ENCODE measurements at regions of chr15 and their contacts with region 1.

Region 1: DNA sequence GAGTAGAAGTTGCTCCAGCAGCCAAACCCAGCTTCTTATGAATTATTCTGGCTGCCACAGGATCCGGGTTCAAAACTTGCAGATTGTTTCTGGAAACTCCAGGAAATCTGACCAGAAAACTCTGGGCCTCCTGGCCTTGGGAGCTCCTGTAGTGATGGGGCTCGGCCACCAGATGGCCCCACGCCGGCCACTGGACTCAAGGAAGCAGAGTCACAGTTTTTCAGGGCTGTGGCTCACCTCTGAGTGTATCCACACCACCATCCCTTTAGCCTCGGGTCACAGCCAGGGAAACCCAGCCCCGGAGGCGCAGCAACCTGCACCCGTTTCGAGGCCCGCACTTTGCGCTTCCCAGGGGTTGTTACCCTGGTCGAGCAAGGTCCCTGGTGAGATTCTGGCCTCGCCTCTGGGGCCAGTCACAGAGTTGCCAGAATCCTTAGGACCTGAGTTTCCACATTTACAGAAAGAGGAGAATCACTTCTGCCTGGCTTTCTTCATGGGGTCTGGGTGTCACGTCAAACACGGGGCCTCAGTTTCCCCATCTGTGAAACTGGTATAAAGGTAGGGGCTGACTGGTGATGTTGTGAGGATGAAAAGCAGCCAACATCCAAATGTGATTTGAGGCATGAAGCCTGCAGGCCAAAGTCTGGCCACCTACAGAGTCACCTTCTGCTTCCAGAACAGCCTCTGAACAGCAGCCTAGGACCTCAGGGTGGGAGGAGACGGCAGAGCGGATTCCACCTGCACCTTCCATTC is 53.5 kb upstream of the LCTL start:
- DNase-seq: peak; percentile 57
- H3K4me3 ChIP-seq: no peak overlapping the region
- H3K27ac ChIP-seq: no peak overlapping the region
- H3K4me1 ChIP-seq: peaks cover 4% of the 10 kb centered on the region
- H3K27me3 ChIP-seq: peaks cover 11% of the 10 kb centered on the region
- CTCF ChIP-seq: peak; percentile 77 to 92

Region 2: DNA sequence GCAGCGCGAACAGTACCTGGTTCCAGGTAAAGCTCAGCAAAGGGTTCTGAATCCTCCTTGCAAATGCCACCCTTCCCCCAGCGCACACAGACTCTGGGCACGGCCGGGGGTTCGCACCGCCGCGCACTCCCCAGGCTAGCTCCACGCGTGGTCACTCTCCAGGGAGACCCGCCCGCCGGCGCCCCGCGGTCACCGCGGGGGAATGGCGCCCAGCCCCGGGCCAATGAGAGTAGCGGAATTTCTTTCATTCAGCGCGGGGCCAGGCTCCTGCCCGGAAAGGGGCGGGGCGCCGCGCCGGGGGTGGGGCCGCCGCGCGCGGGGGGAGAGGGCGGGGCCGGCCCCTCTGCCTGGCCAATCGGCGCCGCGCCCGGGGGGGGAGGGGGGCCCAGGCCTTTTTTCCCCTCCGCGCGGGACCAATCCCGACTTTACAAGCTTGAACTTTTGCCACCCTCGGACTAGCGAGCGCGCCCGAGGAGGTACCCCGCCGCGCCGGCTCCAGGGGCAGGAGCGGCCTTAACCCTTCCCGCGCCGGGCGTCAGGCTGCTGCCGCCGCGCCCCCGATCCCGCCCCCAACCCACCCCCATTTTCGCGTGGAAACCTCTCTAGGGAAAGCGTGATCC is 81.6 kb after region 1 on chr15:
- CTCF ChIA-PET with region 1: interaction called, 3 read pairs
- dilution Hi-C with region 1: no loop called
- in situ Hi-C with region 1: no loop called
- intact Hi-C with region 1: loop called (anchors 1 kb)
- DNase-seq: peak; percentile 89
- H3K4me3 ChIP-seq: peak overlapping the region; percentile 56 to 65 (median 62)
- H3K27ac ChIP-seq: no peak overlapping the region
- H3K4me1 ChIP-seq: peaks cover 30% of the 10 kb centered on the region
- H3K27me3 ChIP-seq: peaks cover 8% of the 10 kb centered on the region
- CTCF ChIP-seq: no peak

Region 3: DNA sequence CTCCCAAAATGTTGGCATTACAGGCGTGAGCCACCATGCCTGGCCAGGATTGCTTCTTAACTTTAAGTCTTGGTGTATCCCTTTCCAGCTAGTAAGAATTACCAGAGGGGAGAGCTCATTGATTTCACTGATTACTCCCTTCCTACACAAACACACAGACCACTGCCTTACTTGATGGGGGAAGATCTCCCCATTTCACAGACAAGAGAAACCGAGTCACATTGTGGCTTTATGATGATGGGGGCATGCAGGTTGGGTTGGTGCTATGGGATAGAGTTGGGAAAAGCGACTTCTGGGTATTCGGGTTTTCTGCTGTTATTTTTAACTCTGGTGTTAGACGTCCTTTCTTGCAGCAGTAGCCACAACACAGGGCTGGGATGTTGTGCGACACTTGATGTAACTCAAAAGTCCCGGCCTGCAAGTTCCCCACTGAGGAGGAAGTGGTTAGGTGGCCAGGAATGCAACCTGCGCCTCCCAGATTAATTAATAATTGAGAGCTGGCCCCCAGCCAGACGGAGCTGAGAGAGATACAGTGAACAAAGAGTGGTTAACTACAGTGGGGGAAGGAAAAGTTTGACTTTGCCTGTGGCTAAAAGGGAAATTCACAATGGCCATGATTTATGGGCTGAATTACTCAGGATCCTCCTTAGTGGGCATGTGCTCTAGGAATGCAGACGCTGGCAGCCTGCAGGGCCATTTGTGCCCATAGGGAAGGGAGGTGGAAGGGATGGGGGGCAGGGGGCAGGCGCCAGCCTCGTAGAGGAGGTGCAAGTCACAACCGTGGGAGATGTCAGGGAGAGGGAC is 146.4 kb after region 1 on chr15:
- CTCF ChIA-PET with region 1: no interaction called
- dilution Hi-C with region 1: no loop called
- in situ Hi-C with region 1: loop called (anchors 10 kb)
- intact Hi-C with region 1: no loop called
- DNase-seq: peak; percentile 86
- H3K4me3 ChIP-seq: no peak overlapping the region
- H3K27ac ChIP-seq: no peak overlapping the region
- H3K4me1 ChIP-seq: peaks cover 46% of the 10 kb centered on the region
- H3K27me3 ChIP-seq: no peaks in the 10 kb centered on the region
- CTCF ChIP-seq: no peak

Measured in mammary epithelial cell (primary cell).